ENCODE measurements at regions of chr14 and their contacts with region 1.

Region 1: GRCh38 chr14:106788534-106788933 is 1262.2 kb downstream of the TMEM121 start:
- DNase-seq: no peak
- H3K4me3 ChIP-seq: no peak overlapping the region
- H3K27ac ChIP-seq: no peak overlapping the region
- H3K4me1 ChIP-seq: no peaks in the 10 kb centered on the region
- H3K27me3 ChIP-seq: no peaks in the 10 kb centered on the region
- CTCF ChIP-seq: no peak

Region 2: DNA sequence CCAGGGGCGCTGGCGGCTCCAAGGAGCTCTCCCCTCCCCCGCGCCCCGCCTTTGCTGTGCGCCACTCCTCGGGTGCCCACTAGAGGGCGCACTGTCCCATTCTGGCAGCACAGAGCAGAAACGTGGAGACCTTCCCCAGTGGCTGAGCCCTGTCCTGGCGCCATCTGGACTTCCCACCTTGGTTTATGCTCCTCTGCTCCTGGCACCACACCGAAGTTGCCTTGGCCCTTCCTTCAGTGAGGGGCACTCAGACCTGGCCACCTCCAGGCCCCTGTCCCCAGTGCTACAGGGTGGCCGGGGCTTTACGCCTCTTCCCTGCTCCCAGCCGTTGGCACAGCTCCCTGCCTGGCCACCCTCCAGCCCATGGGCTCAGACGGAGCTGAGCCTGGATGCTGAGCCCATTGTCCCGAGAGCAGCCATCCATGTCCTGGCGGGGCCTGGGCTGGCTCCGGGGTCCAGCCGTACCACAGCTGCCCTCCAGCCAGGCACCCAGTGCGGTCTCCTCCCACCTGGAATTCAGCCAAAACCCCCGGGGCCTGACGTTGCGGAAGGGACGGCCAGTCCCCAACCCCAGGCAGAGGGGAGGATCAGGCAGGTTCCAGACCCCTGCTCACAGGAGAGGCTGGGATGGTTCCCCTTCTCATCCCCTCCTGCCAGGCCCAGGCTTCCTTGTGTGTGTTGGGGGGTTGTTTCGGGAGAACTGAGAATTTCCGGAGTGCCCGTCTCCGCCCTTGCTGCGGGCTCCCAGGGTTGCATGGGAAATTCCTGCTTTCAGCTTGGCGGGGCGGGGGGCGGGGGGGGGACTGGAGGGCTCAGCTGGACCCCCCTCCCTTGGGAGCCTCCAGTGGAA is 1307.4 kb before region 1 on chr14:
- CTCF ChIA-PET with region 1: no interaction called
- POLR2A ChIA-PET with region 1: no interaction called
- intact Hi-C with region 1: no loop called
- DNase-seq: peak; percentile 90
- H3K4me3 ChIP-seq: peak overlapping the region; percentile 46
- H3K27ac ChIP-seq: peak overlapping the region; percentile 91
- H3K4me1 ChIP-seq: peaks cover 42% of the 10 kb centered on the region
- H3K27me3 ChIP-seq: no peaks in the 10 kb centered on the region
- CTCF ChIP-seq: peak; percentile 99

Region 3: GRCh38 chr14:106343626-106344025 is 444.9 kb before region 1 on chr14:
- CTCF ChIA-PET with region 1: no interaction called
- POLR2A ChIA-PET with region 1: no interaction called
- intact Hi-C with region 1: loop called (anchors 10 kb)
- DNase-seq: no peak
- H3K4me3 ChIP-seq: no peak overlapping the region
- H3K27ac ChIP-seq: no peak overlapping the region
- H3K4me1 ChIP-seq: no peaks in the 10 kb centered on the region
- H3K27me3 ChIP-seq: peaks cover 88% of the 10 kb centered on the region
- CTCF ChIP-seq: no peak

Region 4: GRCh38 chr14:106395456-106396050 is 393.0 kb before region 1 on chr14:
- CTCF ChIA-PET with region 1: no interaction called
- POLR2A ChIA-PET with region 1: no interaction called
- intact Hi-C with region 1: no loop called
- DNase-seq: no peak
- H3K4me3 ChIP-seq: no peak overlapping the region
- H3K27ac ChIP-seq: no peak overlapping the region
- H3K4me1 ChIP-seq: no peaks in the 10 kb centered on the region
- H3K27me3 ChIP-seq: peaks cover 13% of the 10 kb centered on the region
- CTCF ChIP-seq: no peak

Region 5: GRCh38 chr14:106776395-106776983 is 12.0 kb before region 1 on chr14:
- CTCF ChIA-PET with region 1: no interaction called
- POLR2A ChIA-PET with region 1: no interaction called
- intact Hi-C with region 1: no loop called
- DNase-seq: no peak
- H3K4me3 ChIP-seq: no peak overlapping the region
- H3K27ac ChIP-seq: no peak overlapping the region
- H3K4me1 ChIP-seq: no peaks in the 10 kb centered on the region
- H3K27me3 ChIP-seq: no peaks in the 10 kb centered on the region
- CTCF ChIP-seq: no peak

Measured in A673 (cell line).